Activated T-helper 2 cell treated with anti-CD3 and anti-CD28 coated beads, Interferon-gamma antibody, Interleukin-2, Interleukin-4, amounts not matched to agents 10 μg/mL and 5 μg/mL and 100 μg/mL, durations not matched to agents 14 hours and 24 hours and 36 hours (primary cell): ENCODE measurements at regions of chr2 and their contacts with region 1.

Region 1: DNA sequence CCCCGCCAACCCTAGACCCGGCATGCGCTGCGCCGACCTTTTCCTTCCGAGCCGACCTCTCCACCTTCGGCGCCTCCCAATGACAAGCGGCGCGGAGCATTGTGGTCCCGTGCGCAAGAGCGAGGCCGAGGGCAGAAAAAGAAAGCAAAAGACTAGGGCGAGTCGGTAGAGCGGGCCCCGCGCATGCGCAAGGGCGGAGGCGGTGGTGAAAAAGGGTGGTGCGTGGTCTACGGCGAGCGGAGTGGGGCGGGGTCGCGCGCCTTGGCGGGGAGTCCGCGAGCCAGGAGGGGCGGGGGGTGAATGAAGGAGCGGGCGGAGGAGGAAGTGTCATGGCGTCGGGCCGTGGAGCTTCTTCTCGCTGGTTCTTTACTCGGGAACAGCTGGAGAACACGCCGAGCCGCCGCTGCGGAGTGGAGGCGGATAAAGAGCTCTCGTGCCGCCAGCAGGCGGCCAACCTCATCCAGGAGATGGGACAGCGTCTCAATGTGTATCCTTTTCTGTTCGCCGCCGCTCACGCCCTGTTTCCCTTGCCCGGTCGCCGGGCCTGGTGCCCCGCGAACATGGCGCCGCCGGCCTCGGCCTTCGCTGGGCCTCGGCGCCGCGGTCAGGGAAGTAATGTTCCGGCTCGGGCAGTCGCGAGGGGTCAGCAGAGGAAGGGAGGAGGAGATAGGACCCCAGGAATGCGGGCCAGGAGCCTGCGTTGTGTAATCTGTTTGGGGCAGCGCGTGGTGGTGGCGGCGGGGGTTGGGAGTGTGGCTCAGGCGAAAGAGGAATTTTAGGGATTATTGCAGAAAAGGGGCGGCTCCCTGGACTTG is at the start of gene CCNT2:
- DNase-seq: peak; percentile 100
- H3K4me3 Mint-ChIP-seq: peak within 1 kb of the TSS; percentile 99
- H3K27ac Mint-ChIP-seq: peak within 1 kb of the TSS; percentile 98
- H3K4me1 Mint-ChIP-seq: peaks cover 20% of the 10 kb centered on the region
- H3K27me3 Mint-ChIP-seq: peaks cover 3% of the 10 kb centered on the region
- total RNA-seq, gene CCNT2: 39.2 and 41.0 TPM in 2 replicates

Region 2: DNA sequence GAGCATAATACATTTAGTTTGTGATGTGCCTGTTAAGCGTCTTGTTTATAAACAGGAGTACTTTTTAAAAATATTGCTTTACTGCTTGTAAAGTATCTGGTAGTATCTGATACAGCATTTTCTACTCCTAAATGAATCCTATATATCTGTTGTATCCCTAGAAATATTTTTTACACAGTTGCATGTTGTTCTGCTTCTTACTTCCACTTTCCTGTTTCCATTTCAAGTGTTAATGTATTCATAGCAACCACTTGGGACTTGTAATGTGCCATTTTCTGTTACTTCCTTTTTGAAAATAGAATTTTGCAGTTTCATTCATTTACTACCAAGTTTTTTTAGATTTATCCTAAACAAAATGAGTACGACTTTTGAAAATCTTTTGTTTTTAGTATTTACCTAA is 24.8 kb after region 1 on chr2:
- intact Hi-C with region 1: loop called (anchors 2 kb)
- DNase-seq: no peak
- H3K4me3 Mint-ChIP-seq: no peak overlapping the region
- H3K27ac Mint-ChIP-seq: no peak overlapping the region
- H3K4me1 Mint-ChIP-seq: peaks cover 16% of the 10 kb centered on the region
- H3K27me3 Mint-ChIP-seq: no peaks in the 10 kb centered on the region

Region 3: GRCh38 chr2:135664623-135665068 is 745.9 kb after region 1 on chr2:
- intact Hi-C with region 1: loop called (anchors 2 kb)
- DNase-seq: no peak
- H3K4me3 Mint-ChIP-seq: no peak overlapping the region
- H3K27ac Mint-ChIP-seq: peak overlapping the region; percentile 77
- H3K4me1 Mint-ChIP-seq: peaks cover 37% of the 10 kb centered on the region
- H3K27me3 Mint-ChIP-seq: no peaks in the 10 kb centered on the region

Region 4: DNA sequence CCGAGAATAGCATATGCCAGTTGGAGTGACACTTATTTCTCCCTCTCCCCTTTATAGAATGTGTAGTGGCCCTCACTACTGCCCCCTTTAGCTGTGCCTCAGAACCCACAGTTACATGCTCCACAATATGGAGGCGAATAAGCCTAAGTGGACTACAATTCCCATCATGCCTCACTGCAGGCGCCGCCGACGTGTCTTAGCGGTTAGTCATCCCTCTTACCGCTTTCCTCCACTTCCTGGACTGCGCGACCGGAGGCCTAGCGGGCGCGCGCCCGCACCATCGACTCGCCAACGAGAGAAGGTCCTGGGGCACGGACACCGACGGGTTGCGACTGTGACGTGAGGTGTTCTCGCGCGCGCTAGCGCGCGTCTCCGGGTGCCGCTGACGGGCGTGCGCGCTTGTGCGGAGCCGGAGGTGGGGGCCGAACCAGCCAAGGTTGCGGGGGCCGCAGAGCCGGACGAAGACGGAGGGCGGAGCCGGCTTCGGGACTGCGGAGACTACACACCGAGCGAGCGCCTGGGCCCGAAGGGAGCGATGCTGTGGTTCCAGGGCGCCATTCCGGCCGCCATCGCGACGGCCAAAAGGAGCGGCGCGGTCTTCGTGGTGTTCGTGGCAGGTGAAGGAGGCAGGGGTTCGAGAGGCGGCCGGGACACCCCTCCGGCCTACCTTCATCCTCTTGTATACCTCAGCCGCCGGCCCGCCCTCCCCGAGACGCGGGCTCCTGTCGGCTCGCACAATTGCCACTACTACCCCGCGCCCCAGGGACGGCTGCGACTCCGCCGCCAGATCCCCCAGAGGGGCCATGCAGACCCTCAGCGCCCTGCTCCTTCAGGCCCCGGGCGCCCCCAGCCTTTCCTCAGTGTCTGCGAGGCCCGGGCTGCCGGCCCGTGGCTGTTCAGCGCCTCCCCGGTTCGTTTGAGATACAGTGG is 822.9 kb after region 1 on chr2 and contains the start of gene UBXN4:
- intact Hi-C with region 1: loop called (anchors 1 kb)
- DNase-seq: peak; percentile 90
- H3K4me3 Mint-ChIP-seq: peak within 1 kb of the TSS; percentile 98
- H3K27ac Mint-ChIP-seq: peak within 1 kb of the TSS; percentile 100
- H3K4me1 Mint-ChIP-seq: peaks cover 34% of the 10 kb centered on the region
- H3K27me3 Mint-ChIP-seq: no peaks in the 10 kb centered on the region
- total RNA-seq, gene UBXN4: 118 and 138 TPM in 2 replicates

Region 5: DNA sequence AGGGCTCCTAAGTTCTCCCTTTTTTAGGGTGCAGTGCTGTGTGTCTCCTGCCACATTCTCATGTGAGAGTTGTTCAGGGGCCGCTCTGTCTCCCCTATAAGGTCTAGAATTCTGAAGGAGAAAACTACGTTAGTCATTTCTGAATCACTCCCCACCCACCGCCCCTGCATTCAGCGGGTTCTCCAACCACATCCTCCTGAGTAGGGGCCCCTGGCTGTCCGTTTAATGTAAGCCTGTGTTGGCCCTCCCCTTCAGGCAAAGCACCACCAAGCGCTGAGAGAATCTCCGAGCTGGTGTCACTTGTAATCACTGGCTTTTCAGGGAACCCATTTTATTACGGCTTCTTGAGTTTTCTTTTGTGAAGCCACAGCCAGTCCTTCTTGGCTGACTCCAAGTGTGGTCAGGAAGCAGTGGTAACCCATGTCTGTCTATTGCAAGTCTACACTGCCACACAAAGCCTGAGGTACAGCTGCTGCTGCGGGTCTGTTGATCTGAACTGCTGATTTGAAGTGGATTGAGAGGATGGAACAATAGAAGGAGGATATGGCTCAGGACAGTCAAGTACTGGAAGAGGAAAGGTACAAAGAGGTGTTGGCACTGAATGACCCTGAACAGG is 901.4 kb after region 1 on chr2:
- intact Hi-C with region 1: loop called (anchors 1 kb)
- DNase-seq: peak; percentile 80
- H3K4me3 Mint-ChIP-seq: peak overlapping the region; percentile 71
- H3K27ac Mint-ChIP-seq: peak overlapping the region; percentile 87
- H3K4me1 Mint-ChIP-seq: peaks cover 39% of the 10 kb centered on the region
- H3K27me3 Mint-ChIP-seq: no peaks in the 10 kb centered on the region

Region 6: DNA sequence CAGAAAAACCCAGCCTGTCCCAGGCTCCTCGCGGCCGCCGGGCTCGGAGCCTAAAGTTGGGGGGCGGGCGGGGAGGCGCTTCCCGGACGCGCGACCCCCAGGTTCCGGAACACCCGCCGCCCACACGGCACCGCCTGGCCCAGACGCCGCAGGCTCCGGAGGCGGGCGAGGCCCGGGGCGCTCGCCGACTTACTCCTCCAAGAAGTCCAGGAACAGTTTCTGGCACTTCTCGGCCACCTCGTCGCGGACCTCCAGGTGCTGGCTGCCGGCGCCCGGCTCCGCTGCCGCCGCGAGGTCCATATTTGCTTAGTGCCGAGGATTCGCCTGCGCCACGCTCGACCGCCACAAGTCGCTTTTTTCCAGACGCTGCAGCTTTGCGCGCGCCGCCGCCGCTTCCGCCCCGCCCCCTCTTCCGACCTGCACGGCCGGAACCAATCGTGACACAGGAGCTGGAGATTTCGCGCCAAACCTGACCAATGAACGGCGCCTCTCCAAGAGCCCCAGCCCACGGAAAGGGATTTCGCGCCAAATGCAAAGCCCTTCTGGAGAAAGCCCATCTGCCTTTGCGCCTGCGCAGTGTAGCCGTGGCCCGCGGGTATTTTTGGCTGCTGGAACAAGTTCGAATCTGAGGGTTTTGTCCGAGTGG is 957.5 kb after region 1 on chr2 and contains the start of gene MCM6:
- intact Hi-C with region 1: loop called (anchors 1 kb)
- DNase-seq: peak; percentile 98
- H3K4me3 Mint-ChIP-seq: peak within 1 kb of the TSS; percentile 95
- H3K27ac Mint-ChIP-seq: peak within 1 kb of the TSS; percentile 92
- H3K4me1 Mint-ChIP-seq: peaks cover 37% of the 10 kb centered on the region
- H3K27me3 Mint-ChIP-seq: no peaks in the 10 kb centered on the region
- total RNA-seq, gene MCM6: 190 and 191 TPM in 2 replicates